ENCODE measurements at regions of chr1 and their contacts with region 1.

Region 1: GRCh38 chr1:61253059-61253735 is 170.8 kb downstream of the NFIA start:
- DNase-seq: peak in 4 of 6 donors; percentile 59 to 81 (median 76)
- ATAC-seq: peak; percentile 82 to 89 (median 88)
- H3K4me3 ChIP-seq: no peak overlapping the region
- H3K27ac ChIP-seq: peak overlapping the region in 1 of 4 donors; percentile 7
- H3K4me1 ChIP-seq: peaks cover 0 to 22% (median 18%) of the 10 kb centered on the region in 3 donors
- H3K27me3 ChIP-seq: no peaks in the 10 kb centered on the region
- CTCF ChIP-seq: no peak

Region 2: GRCh38 chr1:61184040-61184713 is 69.0 kb before region 1 on chr1:
- intact Hi-C with region 1: no loop called
- DNase-seq: peak; percentile 90 to 96 (median 95)
- ATAC-seq: peak; percentile 90 to 97 (median 96)
- H3K4me3 ChIP-seq: peak overlapping the region in 3 of 4 donors; percentile 21 to 46 (median 40)
- H3K27ac ChIP-seq: peak overlapping the region; percentile 85 to 95 (median 88)
- H3K4me1 ChIP-seq: peaks cover 3 to 42% (median 30%) of the 10 kb centered on the region in 3 donors
- H3K27me3 ChIP-seq: no peaks in the 10 kb centered on the region
- CTCF ChIP-seq: no peak

Region 3: GRCh38 chr1:61202854-61203598 is 50.2 kb before region 1 on chr1:
- intact Hi-C with region 1: loop called in 1 of 3 experiments (anchors 10 kb)
- DNase-seq: no peak
- ATAC-seq: peak in 1 of 4 donors; percentile 38
- H3K4me3 ChIP-seq: no peak overlapping the region
- H3K27ac ChIP-seq: no peak overlapping the region
- H3K4me1 ChIP-seq: peaks cover 0 to 5% (median 0%) of the 10 kb centered on the region in 3 donors
- H3K27me3 ChIP-seq: no peaks in the 10 kb centered on the region
- CTCF ChIP-seq: no peak

Region 4: DNA sequence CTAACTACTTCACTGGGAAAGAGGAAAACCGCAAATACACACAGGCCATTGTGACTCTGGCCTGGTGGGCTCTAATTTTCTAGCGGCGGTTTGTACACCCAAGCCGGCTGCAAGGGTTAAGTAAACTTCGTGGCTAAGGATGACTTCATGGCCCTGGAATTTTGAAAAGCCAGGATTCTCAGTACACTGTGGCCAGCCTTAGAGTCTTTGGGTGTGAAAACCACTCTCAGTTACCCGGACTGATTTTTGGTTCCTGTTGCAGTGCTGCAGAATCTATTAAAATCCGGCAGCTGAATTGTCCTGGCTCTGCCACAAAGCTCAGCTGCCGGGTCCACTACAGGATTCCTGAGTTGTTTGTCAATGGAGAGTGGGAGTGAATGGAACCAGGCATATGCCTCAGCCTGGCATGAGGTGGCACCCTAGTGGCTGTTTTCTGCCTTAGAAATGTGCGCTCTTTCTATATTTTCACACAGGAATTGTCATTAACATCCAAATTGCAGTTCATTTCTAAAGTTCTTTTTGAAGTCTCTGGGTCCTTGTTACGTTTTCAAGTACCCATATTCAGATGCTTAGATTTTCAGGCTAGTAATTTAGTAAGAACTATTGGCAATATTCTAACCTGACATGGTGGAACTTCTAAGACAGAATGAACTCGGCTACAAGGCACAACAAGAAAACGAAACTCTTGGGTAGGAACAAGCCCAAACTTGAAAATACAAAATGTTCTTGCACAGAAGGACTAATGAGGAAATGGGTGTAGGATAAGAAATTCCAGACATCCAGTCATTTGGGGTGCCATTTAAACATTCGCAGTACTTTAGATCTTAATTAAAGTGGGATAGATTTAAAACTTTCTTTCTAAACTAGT is 85.0 kb after region 1 on chr1:
- intact Hi-C with region 1: loop called in 1 of 3 experiments (anchors 10 kb)
- DNase-seq: peak in 5 of 6 donors; percentile 56 to 81 (median 73)
- ATAC-seq: peak; percentile 93 to 97 (median 95)
- H3K4me3 ChIP-seq: peak overlapping the region in 2 of 4 donors; percentile 13 to 26
- H3K27ac ChIP-seq: peak overlapping the region; percentile 61 to 88 (median 68)
- H3K4me1 ChIP-seq: peaks cover 16 to 29% (median 24%) of the 10 kb centered on the region in 3 donors
- H3K27me3 ChIP-seq: no peaks in the 10 kb centered on the region
- CTCF ChIP-seq: peak; percentile 38 to 70 (median 58)

Region 5: DNA sequence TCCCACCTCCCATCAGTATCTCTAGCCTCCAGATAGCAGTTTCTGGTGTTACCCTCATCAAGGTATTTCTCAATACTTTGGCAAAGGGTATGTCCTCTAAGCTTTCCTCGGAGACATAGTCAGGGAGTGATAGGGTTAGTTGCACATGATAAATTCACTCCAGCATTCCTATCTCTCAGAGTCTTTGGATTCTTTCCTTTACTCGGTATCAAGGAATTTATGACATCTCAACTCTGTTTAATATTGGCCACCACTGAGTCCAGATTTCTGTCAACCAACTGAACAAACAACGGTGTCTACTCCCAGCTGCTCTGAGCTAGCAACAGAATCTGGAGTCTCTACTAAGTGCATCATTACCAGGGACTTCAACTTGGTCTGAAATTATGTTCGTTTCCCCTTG is 238.3 kb after region 1 on chr1:
- intact Hi-C with region 1: no loop called
- DNase-seq: no peak
- ATAC-seq: peak in 3 of 4 donors; percentile 31 to 55 (median 32)
- H3K4me3 ChIP-seq: no peak overlapping the region
- H3K27ac ChIP-seq: no peak overlapping the region
- H3K4me1 ChIP-seq: no peaks in the 10 kb centered on the region
- H3K27me3 ChIP-seq: no peaks in the 10 kb centered on the region
- CTCF ChIP-seq: no peak

Measured in pancreas (tissue), 10 donors.